Caco-2 (cell line): ENCODE measurements at regions of chr4 and their contacts with region 1.

Region 1: GRCh38 chr4:70704331-70705145 is 16.2 kb downstream of the UTP3 start:
- DNase-seq: peak; percentile 88 to 90
- H3K4me3 ChIP-seq: peak overlapping the region; percentile 79
- H3K4me3 Mint-ChIP-seq: peak overlapping the region; percentile 98
- H3K27ac Mint-ChIP-seq: peak overlapping the region; percentile 98
- H3K4me1 ChIP-seq: peaks cover 11% of the 10 kb centered on the region
- H3K4me1 Mint-ChIP-seq: peaks cover 6% of the 10 kb centered on the region
- H3K27me3 ChIP-seq: no peaks in the 10 kb centered on the region
- H3K27me3 Mint-ChIP-seq: no peaks in the 10 kb centered on the region
- CTCF ChIP-seq: peak; percentile 30 to 63

Region 2: DNA sequence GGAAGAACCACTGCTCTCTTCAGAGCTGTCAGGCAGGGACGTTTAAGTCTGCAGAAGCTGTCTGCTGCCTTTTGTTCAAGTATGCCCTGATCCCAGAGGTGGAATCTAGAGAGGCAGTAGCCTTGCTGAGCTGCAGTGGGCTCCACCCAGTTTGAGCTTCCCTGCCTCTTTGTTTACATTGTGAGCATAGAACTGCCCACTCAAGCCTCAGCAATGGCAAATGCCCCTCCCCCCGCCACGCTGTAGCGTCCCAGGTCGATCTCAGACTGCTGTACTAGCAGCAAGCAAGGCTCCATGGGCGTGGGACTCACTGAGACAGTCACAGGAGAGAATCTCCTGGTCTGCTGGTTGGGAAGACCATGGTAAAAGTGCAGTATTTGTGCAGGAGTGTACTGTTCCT is 267.3 kb before region 1 on chr4:
- CTCF ChIA-PET with region 1: no interaction called
- POLR2A ChIA-PET with region 1: no interaction called
- intact Hi-C with region 1: no loop called
- DNase-seq: peak; percentile 3 to 38
- H3K4me3 ChIP-seq: no peak overlapping the region
- H3K4me3 Mint-ChIP-seq: no peak overlapping the region
- H3K27ac Mint-ChIP-seq: no peak overlapping the region
- H3K4me1 ChIP-seq: no peaks in the 10 kb centered on the region
- H3K4me1 Mint-ChIP-seq: no peaks in the 10 kb centered on the region
- H3K27me3 ChIP-seq: no peaks in the 10 kb centered on the region
- H3K27me3 Mint-ChIP-seq: peaks cover 6% of the 10 kb centered on the region
- CTCF ChIP-seq: no peak

Region 3: GRCh38 chr4:70601422-70602039 is 103.0 kb before region 1 on chr4:
- CTCF ChIA-PET with region 1: no interaction called
- POLR2A ChIA-PET with region 1: no interaction called
- intact Hi-C with region 1: loop called (anchors 5 kb)
- DNase-seq: peak; percentile 64 to 69
- H3K4me3 ChIP-seq: no peak overlapping the region
- H3K4me3 Mint-ChIP-seq: no peak overlapping the region
- H3K27ac Mint-ChIP-seq: no peak overlapping the region
- H3K4me1 ChIP-seq: peaks cover 4% of the 10 kb centered on the region; the same call in 1 of the 2 replicates
- H3K4me1 Mint-ChIP-seq: peaks cover 6% of the 10 kb centered on the region
- H3K27me3 ChIP-seq: no peaks in the 10 kb centered on the region
- H3K27me3 Mint-ChIP-seq: no peaks in the 10 kb centered on the region
- CTCF ChIP-seq: peak; percentile 64 to 73

Region 4: GRCh38 chr4:70651864-70652506 is 52.6 kb before region 1 on chr4:
- CTCF ChIA-PET with region 1: no interaction called
- POLR2A ChIA-PET with region 1: no interaction called
- intact Hi-C with region 1: loop called (anchors 5 kb)
- DNase-seq: peak in 1 of 2 experiments; percentile 20
- H3K4me3 ChIP-seq: no peak overlapping the region
- H3K4me3 Mint-ChIP-seq: no peak overlapping the region
- H3K27ac Mint-ChIP-seq: no peak overlapping the region
- H3K4me1 ChIP-seq: peaks cover 3% of the 10 kb centered on the region; the same call in 1 of the 2 replicates
- H3K4me1 Mint-ChIP-seq: peaks cover 7% of the 10 kb centered on the region
- H3K27me3 ChIP-seq: no peaks in the 10 kb centered on the region
- H3K27me3 Mint-ChIP-seq: no peaks in the 10 kb centered on the region
- CTCF ChIP-seq: peak in 1 of 2 experiments; percentile 31

Region 5: DNA sequence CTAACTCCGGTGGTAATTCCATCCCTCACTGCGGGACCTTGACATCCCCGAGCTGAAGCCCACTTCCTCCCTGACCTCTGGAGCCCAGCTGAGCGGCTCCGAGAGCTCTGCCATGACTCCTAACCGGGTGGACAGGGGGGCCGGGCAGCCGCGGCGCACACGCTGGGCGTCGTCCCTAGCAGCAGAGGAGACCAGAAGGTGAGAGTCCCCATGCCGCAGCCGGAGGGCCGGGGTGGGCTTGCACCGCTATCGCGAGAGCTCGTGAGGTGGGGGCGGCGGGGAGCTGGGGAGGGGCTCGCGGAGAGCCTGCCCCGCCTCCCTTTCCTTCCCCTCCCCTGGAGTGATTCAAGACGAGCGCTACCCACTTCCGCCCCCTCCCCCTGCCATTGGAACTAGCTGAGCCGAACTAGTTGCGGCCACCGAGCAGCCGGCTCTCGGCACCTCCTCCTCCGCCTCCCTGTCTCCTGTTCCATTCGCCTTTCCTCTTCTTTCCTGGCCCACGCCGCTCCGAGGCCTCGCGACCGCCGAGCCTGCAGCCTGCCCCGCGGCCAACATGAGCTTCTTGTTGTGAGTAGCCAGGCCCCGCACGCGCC is 197.5 kb after region 1 on chr4 and contains the start of gene MOB1B:
- CTCF ChIA-PET with region 1: no interaction called
- POLR2A ChIA-PET with region 1: interaction called, 3 read pairs
- intact Hi-C with region 1: loop called (anchors 5 kb)
- DNase-seq: peak; percentile 88 to 91
- H3K4me3 ChIP-seq: peak within 1 kb of the TSS; percentile 55
- H3K4me3 Mint-ChIP-seq: peak within 1 kb of the TSS; percentile 97
- H3K27ac Mint-ChIP-seq: peak within 1 kb of the TSS; percentile 94
- H3K4me1 ChIP-seq: no peaks in the 10 kb centered on the region
- H3K4me1 Mint-ChIP-seq: peaks cover 7% of the 10 kb centered on the region
- H3K27me3 ChIP-seq: no peaks in the 10 kb centered on the region
- H3K27me3 Mint-ChIP-seq: no peaks in the 10 kb centered on the region
- CTCF ChIP-seq: peak; percentile 45 to 53
- total RNA-seq, gene MOB1B: 23.3 and 23.6 TPM in 2 replicates